ENCODE measurements at regions of chr12 and their contacts with region 1.

Region 1: DNA sequence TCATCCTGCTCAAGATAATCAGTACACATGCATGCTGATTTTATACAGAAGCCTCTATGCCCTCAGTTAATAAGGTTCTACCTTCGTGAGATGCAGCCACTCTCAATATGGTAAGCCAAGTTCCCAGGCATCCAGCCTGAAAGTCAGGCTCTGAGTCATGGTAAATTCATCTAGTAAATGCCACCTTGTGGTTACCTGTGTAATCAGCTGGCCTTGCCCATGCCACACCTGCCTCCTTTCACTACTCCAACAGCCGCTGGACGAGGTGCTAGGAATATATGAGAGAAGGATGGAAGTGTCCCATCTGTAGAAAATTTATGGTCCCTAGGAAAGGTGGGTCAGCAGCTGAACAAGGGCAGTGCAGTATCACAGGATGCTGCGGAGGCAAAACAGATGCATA is 207.3 kb downstream of the SSPN start:
- DNase-seq: peak; percentile 78
- H3K4me3 Mint-ChIP-seq: no peak overlapping the region
- H3K27ac Mint-ChIP-seq: no peak overlapping the region
- H3K4me1 Mint-ChIP-seq: no peaks in the 10 kb centered on the region
- H3K27me3 Mint-ChIP-seq: no peaks in the 10 kb centered on the region
- CTCF ChIP-seq: peak; percentile 42

Region 2: DNA sequence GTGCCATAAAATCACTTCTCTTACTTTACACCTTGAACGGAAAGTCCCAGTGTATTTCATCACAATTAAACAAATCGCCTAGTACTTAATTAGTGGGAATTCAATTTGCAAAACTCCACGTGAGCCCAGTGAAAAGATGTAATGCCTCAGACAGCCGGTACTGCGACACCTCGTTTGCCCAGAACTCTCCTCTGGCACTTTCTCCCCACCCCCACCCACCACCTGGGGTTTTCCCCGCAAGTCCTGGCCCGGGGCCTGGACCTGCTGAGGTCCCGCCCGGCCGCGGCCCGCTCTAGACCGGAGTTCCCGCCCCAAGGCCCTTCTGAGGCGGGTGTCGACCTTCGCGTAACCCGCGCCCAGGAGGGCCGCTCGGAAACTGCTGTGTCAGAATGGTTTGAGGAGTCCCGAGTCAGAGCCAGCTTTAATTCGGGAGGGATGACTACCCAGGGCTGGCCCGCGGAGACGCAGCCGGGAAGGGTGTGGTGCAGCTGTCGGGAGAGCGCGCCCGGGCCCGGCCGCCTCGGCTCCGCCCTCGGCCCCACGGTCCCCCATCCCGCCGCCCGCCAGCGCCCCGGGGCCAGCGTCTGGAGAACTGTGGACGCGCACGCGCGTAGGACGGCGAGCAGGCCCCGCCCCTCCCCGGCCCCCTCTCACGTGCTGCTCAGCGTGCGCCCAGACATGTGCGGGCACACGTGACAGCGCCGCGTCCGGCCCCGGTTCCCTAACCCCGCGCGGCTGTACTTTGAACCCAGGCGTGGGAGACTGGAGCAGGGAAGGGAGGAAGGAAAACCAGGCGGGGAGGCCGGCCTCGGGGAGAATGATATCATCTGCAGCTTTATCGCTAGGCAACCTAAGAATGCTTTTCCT is 288.6 kb before region 1 on chr12:
- CTCF ChIA-PET with region 1: interaction called, 78 read pairs
- POLR2A ChIA-PET with region 1: interaction called, 12 read pairs
- intact Hi-C with region 1: loop called (anchors 1 kb)
- DNase-seq: peak; percentile 84
- H3K4me3 Mint-ChIP-seq: peak overlapping the region; percentile 72
- H3K27ac Mint-ChIP-seq: peak overlapping the region; percentile 89
- H3K4me1 Mint-ChIP-seq: peaks cover 22% of the 10 kb centered on the region
- H3K27me3 Mint-ChIP-seq: no peaks in the 10 kb centered on the region
- CTCF ChIP-seq: no peak

Region 3: GRCh38 chr12:26416550-26416949 is 13.9 kb after region 1 on chr12:
- CTCF ChIA-PET with region 1: interaction called, 11 read pairs
- POLR2A ChIA-PET with region 1: no interaction called
- intact Hi-C with region 1: no loop called
- DNase-seq: no peak
- H3K4me3 Mint-ChIP-seq: no peak overlapping the region
- H3K27ac Mint-ChIP-seq: no peak overlapping the region
- H3K4me1 Mint-ChIP-seq: no peaks in the 10 kb centered on the region
- H3K27me3 Mint-ChIP-seq: no peaks in the 10 kb centered on the region
- CTCF ChIP-seq: no peak

Region 4: GRCh38 chr12:26514364-26514763 is 111.7 kb after region 1 on chr12:
- CTCF ChIA-PET with region 1: no interaction called
- POLR2A ChIA-PET with region 1: no interaction called
- intact Hi-C with region 1: no loop called
- DNase-seq: no peak
- H3K4me3 Mint-ChIP-seq: no peak overlapping the region
- H3K27ac Mint-ChIP-seq: no peak overlapping the region
- H3K4me1 Mint-ChIP-seq: no peaks in the 10 kb centered on the region
- H3K27me3 Mint-ChIP-seq: no peaks in the 10 kb centered on the region
- CTCF ChIP-seq: no peak

Region 5: GRCh38 chr12:26555139-26555538 is 152.5 kb after region 1 on chr12:
- CTCF ChIA-PET with region 1: no interaction called
- POLR2A ChIA-PET with region 1: no interaction called
- intact Hi-C with region 1: no loop called
- DNase-seq: peak; percentile 10
- H3K4me3 Mint-ChIP-seq: no peak overlapping the region
- H3K27ac Mint-ChIP-seq: no peak overlapping the region
- H3K4me1 Mint-ChIP-seq: no peaks in the 10 kb centered on the region
- H3K27me3 Mint-ChIP-seq: no peaks in the 10 kb centered on the region
- CTCF ChIP-seq: no peak